ENCODE measurements at regions of chr5 and their contacts with region 1.

Region 1: DNA sequence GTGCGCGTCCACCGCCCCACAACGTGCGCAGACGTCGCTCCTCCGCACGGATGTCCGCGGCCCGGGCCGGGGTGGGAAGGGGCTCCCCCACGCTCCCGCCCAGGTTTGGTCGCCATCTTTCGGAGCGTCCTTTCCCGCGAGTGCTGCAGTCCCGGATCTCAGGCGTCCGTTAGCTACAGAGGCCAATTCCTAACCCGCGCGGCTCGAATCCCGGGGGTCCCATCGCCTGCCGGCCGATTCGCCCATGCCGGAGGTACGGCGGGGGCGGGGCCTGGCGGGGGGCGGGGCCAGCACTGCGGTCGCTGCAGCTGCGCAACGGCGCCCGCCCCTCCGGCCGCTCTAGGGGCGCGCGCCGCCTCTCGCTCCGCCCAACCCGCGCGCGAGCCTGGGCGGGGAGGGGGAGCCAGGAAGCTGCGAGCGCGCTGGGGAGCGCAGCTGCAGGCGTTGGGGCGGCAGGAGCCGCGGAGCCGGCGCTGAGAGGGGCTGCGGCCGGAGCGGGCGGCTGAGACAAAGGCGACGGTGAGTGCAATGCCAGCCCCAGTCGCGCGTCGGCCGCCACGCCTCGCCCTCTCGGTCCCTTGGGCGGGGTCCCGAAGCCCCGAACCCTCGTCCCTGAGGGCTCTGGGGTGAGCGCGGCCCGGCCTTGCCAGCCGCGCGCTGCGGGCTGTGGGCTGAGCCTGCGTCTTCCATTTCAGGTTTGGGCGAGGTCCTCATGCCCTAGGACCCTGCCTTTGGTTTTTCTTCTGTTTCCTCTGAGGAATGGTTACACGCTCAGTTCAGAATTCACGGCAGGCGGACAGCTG is at the start of gene CDC42SE2:
- DNase-seq: peak; percentile 89 to 94
- ATAC-seq: peak; percentile 98
- H3K4me3 ChIP-seq: peak within 1 kb of the TSS; percentile 91 to 97
- H3K27ac ChIP-seq: peak within 1 kb of the TSS in 1 of 2 donors; percentile 29
- H3K4me1 ChIP-seq: peaks cover 0 to 1% of the 10 kb centered on the region in 2 donors
- H3K27me3 ChIP-seq: no peaks in the 10 kb centered on the region
- total RNA-seq, gene CDC42SE2: 20.4 to 25.6 TPM

Region 2: DNA sequence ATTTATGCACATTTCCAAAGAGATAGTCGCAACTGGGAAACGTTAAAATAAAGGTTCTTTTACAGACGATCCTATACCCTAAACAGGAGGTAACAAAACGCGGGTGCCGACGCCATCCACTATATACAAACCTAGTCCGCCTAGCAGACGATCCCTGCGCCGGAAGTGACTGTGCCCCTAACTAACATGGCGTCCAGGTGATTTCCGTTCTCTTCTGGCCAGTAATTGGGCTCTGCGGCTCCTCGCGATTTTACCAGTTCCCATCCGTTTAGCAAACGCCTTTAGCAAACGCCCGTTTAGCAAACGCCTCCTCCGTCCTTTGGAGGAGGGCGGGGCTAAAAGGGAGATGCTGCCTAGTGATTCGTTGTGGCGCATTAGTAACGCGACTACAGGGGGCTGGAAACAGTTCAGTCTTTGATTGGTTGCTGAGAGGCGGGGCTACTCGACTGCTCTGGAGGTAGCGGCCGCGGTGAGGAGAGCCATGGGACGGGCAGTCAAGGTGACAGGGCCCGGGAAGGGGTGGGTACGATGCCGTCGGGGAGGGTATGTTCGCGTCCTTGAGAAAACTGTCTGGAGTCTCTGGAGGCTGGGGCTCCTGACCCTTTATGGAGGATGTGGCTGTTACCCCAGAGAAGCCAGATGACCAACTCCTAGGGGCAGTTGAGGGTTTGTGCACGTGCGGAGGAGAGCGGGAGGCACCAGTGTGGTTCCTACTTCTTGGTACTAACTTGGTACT is 93.1 kb before region 1 on chr5 and contains the start of gene LYRM7:
- intact Hi-C with region 1: loop called (anchors 2 to 5 kb)
- DNase-seq: peak; percentile 94 to 98
- ATAC-seq: peak; percentile 98
- H3K4me3 ChIP-seq: peak within 1 kb of the TSS; percentile 70 to 87
- H3K27ac ChIP-seq: no peak within 1 kb of the TSS
- H3K4me1 ChIP-seq: peaks cover 2 to 5% of the 10 kb centered on the region in 2 donors
- H3K27me3 ChIP-seq: no peaks in the 10 kb centered on the region
- total RNA-seq, gene LYRM7: 7.1 to 12.0 TPM

Region 3: GRCh38 chr5:131224387-131225201 is 39.3 kb before region 1 on chr5:
- intact Hi-C with region 1: no loop called
- DNase-seq: peak in 1 of 2 donors; percentile 73
- ATAC-seq: peak; percentile 59
- H3K4me3 ChIP-seq: no peak overlapping the region
- H3K27ac ChIP-seq: no peak overlapping the region
- H3K4me1 ChIP-seq: no peaks in the 10 kb centered on the region
- H3K27me3 ChIP-seq: no peaks in the 10 kb centered on the region

Region 4: GRCh38 chr5:131394128-131394527 is 130.3 kb after region 1 on chr5:
- intact Hi-C with region 1: loop called (anchors 10 kb)
- DNase-seq: no peak
- ATAC-seq: peak; percentile 46
- H3K4me3 ChIP-seq: no peak overlapping the region
- H3K27ac ChIP-seq: no peak overlapping the region
- H3K4me1 ChIP-seq: peaks cover 3 to 7% of the 10 kb centered on the region in 2 donors
- H3K27me3 ChIP-seq: no peaks in the 10 kb centered on the region